ENCODE measurements at regions of chr2 and their contacts with region 1.

Region 1: GRCh38 chr2:43131024-43131889 is 95.1 kb downstream of the ZFP36L2 start:
- DNase-seq: peak; percentile 62
- ATAC-seq: peak; percentile 61
- H3K4me3 Mint-ChIP-seq: peak overlapping the region; percentile 8
- H3K27ac Mint-ChIP-seq: peak overlapping the region; percentile 92
- H3K4me1 Mint-ChIP-seq: peaks cover 93% of the 10 kb centered on the region
- H3K27me3 Mint-ChIP-seq: no peaks in the 10 kb centered on the region
- CTCF ChIP-seq: no peak

Region 2: GRCh38 chr2:42974721-42975717 is 156.2 kb before region 1 on chr2:
- CTCF ChIA-PET with region 1: interaction called, 3 read pairs
- POLR2A ChIA-PET with region 1: no interaction called
- intact Hi-C with region 1: loop called (anchors 1 kb)
- DNase-seq: peak; percentile 54
- ATAC-seq: peak; percentile 76
- H3K4me3 Mint-ChIP-seq: no peak overlapping the region
- H3K27ac Mint-ChIP-seq: no peak overlapping the region
- H3K4me1 Mint-ChIP-seq: peaks cover 35% of the 10 kb centered on the region
- H3K27me3 Mint-ChIP-seq: peaks cover 3% of the 10 kb centered on the region
- CTCF ChIP-seq: no peak

Region 3: DNA sequence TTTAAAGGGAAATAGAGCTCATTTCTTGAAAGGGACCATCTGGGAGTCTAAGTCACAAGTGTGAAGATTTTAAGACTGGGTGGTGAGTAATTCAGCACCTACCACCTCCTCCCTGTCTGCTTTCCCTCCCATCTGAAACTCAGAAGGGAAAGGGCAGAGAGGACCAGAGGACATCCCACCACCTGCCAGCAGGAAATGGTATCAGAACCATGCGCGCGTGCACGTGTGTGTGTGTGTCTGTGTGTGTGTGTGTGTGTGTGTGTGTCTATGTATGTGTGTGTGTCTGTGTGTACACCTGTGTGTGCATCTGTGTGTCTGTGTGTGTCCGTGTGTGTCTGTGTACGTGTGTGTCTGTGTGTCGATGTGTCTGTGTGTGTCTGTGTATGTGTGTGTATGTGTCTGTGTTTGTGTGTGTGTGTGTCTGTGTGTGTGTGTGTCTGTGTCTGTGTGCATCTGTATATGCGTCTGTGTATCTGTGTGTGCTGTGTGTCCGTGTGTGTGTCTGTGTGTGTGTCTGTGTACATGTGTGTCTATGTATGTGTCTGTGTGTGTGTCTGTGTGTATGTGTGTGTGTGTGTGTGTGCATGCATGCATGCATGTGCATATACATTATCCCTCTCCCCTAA is 18.3 kb after region 1 on chr2:
- CTCF ChIA-PET with region 1: no interaction called
- POLR2A ChIA-PET with region 1: interaction called, 14 read pairs
- intact Hi-C with region 1: no loop called
- DNase-seq: no peak
- ATAC-seq: no peak
- H3K4me3 Mint-ChIP-seq: no peak overlapping the region
- H3K27ac Mint-ChIP-seq: no peak overlapping the region
- H3K4me1 Mint-ChIP-seq: peaks cover 22% of the 10 kb centered on the region
- H3K27me3 Mint-ChIP-seq: no peaks in the 10 kb centered on the region
- CTCF ChIP-seq: no peak

Region 4: DNA sequence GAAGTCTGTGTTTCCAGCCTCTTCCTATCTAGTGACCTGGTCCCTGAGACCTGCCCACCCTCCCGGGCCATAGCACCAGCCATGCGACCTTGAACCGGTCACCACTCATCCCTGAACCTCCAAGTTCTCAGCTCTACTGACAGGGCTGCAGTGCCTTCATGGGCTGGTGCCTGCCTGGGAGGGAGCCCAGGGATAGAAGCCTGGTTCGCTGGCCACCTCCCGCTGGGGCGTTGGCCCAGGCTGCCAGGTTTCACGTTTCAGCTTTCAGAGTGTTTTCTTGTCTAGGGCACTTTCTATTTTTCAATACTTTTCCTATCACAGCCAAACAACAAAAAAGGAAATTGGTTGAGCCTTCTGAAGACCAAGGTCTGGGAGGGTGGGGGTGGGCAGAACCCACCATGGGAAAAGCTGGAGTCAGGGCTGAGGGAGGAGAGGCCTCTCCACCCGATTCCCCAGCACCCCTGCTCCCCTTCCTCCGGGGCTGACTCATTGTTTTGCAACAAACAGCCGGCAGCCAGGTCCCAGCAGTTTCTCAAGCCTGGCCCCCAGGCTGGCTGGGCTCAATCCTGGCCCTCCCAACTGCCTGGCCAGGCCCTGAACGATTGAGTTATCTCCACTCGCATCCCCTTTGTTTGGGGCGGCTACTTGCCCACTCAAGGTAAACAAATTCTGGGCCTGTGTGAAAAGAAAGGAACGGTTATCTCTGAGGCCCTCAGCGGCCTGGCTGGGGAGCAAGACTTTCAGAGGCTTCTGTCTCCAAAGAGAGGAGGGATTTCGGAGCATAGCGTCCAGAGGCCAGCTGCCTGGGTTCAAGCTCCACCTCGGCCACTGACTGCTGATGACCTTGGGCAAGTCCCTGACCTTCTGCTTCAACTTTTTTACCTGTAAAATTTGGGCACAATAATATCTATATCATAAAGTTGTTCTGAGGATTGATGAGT is 47.6 kb after region 1 on chr2:
- CTCF ChIA-PET with region 1: interaction called, 6 read pairs
- POLR2A ChIA-PET with region 1: interaction called, 29 read pairs
- intact Hi-C with region 1: no loop called
- DNase-seq: no peak
- ATAC-seq: no peak
- H3K4me3 Mint-ChIP-seq: no peak overlapping the region
- H3K27ac Mint-ChIP-seq: no peak overlapping the region
- H3K4me1 Mint-ChIP-seq: peaks cover 53% of the 10 kb centered on the region
- H3K27me3 Mint-ChIP-seq: no peaks in the 10 kb centered on the region
- CTCF ChIP-seq: no peak

Region 5: DNA sequence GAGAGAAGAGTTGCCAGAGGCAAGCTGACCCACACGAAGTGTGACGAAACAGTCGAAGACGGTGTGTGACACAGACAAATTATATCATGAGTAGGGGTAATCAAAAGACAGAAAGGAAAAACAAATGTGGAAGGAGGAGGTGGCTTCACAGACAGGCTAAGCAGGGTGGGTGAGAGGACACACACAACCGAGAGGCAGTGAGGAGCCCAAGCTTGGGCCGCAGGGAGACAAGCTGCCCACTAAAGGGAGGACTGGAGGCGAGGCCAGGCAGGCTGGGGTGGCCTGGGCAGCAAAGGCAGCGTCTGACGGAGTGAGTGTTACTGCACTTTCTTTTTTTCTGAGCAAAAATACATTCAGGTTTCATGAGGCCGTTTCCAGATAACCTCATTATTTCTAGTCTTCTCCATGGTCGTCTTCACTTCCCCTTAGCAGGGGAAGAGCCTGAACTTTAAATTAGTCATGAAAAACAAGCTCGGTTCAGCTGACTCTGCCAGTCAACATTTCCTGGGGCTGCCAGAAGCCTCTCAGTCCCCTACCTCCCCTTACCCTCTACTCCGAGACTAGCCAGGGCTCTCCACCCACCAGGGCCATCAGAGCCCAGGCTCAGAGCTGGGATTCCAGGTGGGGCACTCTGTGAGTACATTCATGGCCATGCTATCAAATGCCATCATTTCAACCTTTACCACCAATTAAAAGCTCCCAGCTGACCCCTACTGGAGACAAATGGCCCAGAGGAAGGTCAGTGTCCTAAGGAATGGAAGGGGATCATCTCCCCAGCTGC is 108.9 kb after region 1 on chr2:
- CTCF ChIA-PET with region 1: interaction called, 6 read pairs
- POLR2A ChIA-PET with region 1: interaction called, 13 read pairs
- intact Hi-C with region 1: no loop called
- DNase-seq: no peak
- ATAC-seq: peak; percentile 80
- H3K4me3 Mint-ChIP-seq: peak overlapping the region; percentile 56
- H3K27ac Mint-ChIP-seq: peak overlapping the region; percentile 91
- H3K4me1 Mint-ChIP-seq: peaks cover 40% of the 10 kb centered on the region
- H3K27me3 Mint-ChIP-seq: no peaks in the 10 kb centered on the region
- CTCF ChIP-seq: no peak

Region 6: GRCh38 chr2:43484323-43484930 is 353.2 kb after region 1 on chr2:
- CTCF ChIA-PET with region 1: interaction called, 49 read pairs
- POLR2A ChIA-PET with region 1: interaction called, 4 read pairs
- intact Hi-C with region 1: loop called (anchors 1 kb)
- DNase-seq: no peak
- ATAC-seq: no peak
- H3K4me3 Mint-ChIP-seq: no peak overlapping the region
- H3K27ac Mint-ChIP-seq: no peak overlapping the region
- H3K4me1 Mint-ChIP-seq: peaks cover 29% of the 10 kb centered on the region
- H3K27me3 Mint-ChIP-seq: no peaks in the 10 kb centered on the region
- CTCF ChIP-seq: peak; percentile 45